ENCODE measurements at regions of chr20 and their contacts with region 1.

Region 1: GRCh38 chr20:19205977-19206396 is 6.5 kb upstream of the SLC24A3 start:
- DNase-seq: peak; percentile 57
- H3K4me3 ChIP-seq: no peak overlapping the region
- H3K27ac ChIP-seq: no peak overlapping the region
- H3K4me1 ChIP-seq: no peaks in the 10 kb centered on the region
- CTCF ChIP-seq: peak; percentile 94

Region 2: GRCh38 chr20:19512886-19513677 is 307.1 kb after region 1 on chr20:
- CTCF ChIA-PET with region 1: no interaction called
- POLR2A ChIA-PET with region 1: no interaction called
- intact Hi-C with region 1: no loop called
- DNase-seq: no peak
- H3K4me3 ChIP-seq: no peak overlapping the region
- H3K27ac ChIP-seq: no peak overlapping the region
- H3K4me1 ChIP-seq: no peaks in the 10 kb centered on the region
- CTCF ChIP-seq: no peak

Region 3: GRCh38 chr20:19583532-19584175 is 377.7 kb after region 1 on chr20:
- CTCF ChIA-PET with region 1: no interaction called
- POLR2A ChIA-PET with region 1: no interaction called
- intact Hi-C with region 1: loop called (anchors 10 kb)
- DNase-seq: peak; percentile 11
- H3K4me3 ChIP-seq: no peak overlapping the region
- H3K27ac ChIP-seq: no peak overlapping the region
- H3K4me1 ChIP-seq: no peaks in the 10 kb centered on the region
- CTCF ChIP-seq: peak; percentile 76

Region 4: GRCh38 chr20:19858466-19859371 is 652.7 kb after region 1 on chr20:
- CTCF ChIA-PET with region 1: no interaction called
- POLR2A ChIA-PET with region 1: no interaction called
- intact Hi-C with region 1: no loop called
- DNase-seq: no peak
- H3K4me3 ChIP-seq: no peak overlapping the region
- H3K27ac ChIP-seq: no peak overlapping the region
- H3K4me1 ChIP-seq: no peaks in the 10 kb centered on the region
- CTCF ChIP-seq: no peak

Measured in OCI-LY7 (cell line).